ENCODE measurements at regions of chr6 and their contacts with region 1.

Region 1: GRCh38 chr6:30730601-30731435 is 10.7 kb downstream of the TUBB start:
- DNase-seq: peak; percentile 77
- ATAC-seq: peak; percentile 90
- H3K4me3 ChIP-seq: peak overlapping the region; percentile 41 to 53
- H3K27ac ChIP-seq: peak overlapping the region; percentile 55
- H3K4me1 ChIP-seq: peaks cover 12 to 37% of the 10 kb centered on the region in 2 experiments
- H3K27me3 ChIP-seq: no peaks in the 10 kb centered on the region
- CTCF ChIP-seq: peak; percentile 86 to 91 (median 88)
- POLR2A ChIP-seq: no peak
- RAD21 ChIP-seq: peak; percentile 98

Region 2: DNA sequence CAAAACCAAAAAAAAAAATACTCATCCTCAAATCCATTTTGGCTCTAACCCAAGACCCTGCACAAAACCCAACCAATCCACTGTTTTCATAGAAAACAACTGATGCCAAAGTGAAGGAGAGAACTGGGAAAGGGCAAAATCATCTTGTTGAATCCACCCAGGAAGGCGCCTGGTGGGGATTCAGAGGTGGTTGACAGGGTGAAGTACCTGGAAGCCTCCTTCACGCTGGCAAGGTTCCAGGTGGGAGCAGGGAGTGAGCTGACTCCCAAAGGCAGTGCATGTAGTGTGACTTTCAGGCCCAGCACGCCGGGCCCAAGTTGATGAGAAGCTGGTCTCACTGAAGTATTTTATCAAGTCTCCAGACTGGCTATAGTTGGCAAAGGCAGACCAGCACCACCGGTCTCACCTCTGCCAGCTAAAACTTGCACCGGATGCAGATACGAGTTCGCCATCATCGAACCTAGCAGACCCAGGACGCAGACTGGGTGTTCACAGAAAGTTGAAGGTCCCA is 130.3 kb before region 1 on chr6:
- CTCF ChIA-PET with region 1: interaction called, 9 read pairs
- POLR2A ChIA-PET with region 1: interaction called, 5 read pairs
- RAD21 ChIA-PET with region 1: interaction called in 1 of 2 experiments, 3 read pairs
- intact Hi-C with region 1: loop called (anchors 5 kb)
- DNase-seq: no peak
- ATAC-seq: no peak
- H3K4me3 ChIP-seq: no peak overlapping the region
- H3K27ac ChIP-seq: no peak overlapping the region
- H3K4me1 ChIP-seq: peaks cover 0 to 12% of the 10 kb centered on the region in 2 experiments; a peak in 2 of 4 replicates
- H3K27me3 ChIP-seq: no peaks in the 10 kb centered on the region
- CTCF ChIP-seq: no peak
- POLR2A ChIP-seq: no peak
- RAD21 ChIP-seq: no peak

Region 3: GRCh38 chr6:30672445-30673253 is 58.2 kb before region 1 on chr6 and contains the start of gene DHX16:
- CTCF ChIA-PET with region 1: interaction called, 70 read pairs
- POLR2A ChIA-PET with region 1: interaction called, 5 read pairs
- RAD21 ChIA-PET with region 1: interaction called in 1 of 2 experiments, 3 read pairs
- intact Hi-C with region 1: no loop called
- DNase-seq: peak; percentile 99
- ATAC-seq: peak; percentile 85
- H3K4me3 ChIP-seq: peak within 1 kb of the TSS; percentile 98
- H3K27ac ChIP-seq: peak within 1 kb of the TSS; percentile 57
- H3K4me1 ChIP-seq: peaks cover 4 to 22% of the 10 kb centered on the region in 2 experiments; a peak in 3 of 4 replicates
- H3K27me3 ChIP-seq: no peaks in the 10 kb centered on the region
- CTCF ChIP-seq: peak; percentile 84 to 92 (median 88)
- POLR2A ChIP-seq: peak; percentile 42
- RAD21 ChIP-seq: peak; percentile 80
- total RNA-seq, gene DHX16: 46.0 TPM

Region 4: DNA sequence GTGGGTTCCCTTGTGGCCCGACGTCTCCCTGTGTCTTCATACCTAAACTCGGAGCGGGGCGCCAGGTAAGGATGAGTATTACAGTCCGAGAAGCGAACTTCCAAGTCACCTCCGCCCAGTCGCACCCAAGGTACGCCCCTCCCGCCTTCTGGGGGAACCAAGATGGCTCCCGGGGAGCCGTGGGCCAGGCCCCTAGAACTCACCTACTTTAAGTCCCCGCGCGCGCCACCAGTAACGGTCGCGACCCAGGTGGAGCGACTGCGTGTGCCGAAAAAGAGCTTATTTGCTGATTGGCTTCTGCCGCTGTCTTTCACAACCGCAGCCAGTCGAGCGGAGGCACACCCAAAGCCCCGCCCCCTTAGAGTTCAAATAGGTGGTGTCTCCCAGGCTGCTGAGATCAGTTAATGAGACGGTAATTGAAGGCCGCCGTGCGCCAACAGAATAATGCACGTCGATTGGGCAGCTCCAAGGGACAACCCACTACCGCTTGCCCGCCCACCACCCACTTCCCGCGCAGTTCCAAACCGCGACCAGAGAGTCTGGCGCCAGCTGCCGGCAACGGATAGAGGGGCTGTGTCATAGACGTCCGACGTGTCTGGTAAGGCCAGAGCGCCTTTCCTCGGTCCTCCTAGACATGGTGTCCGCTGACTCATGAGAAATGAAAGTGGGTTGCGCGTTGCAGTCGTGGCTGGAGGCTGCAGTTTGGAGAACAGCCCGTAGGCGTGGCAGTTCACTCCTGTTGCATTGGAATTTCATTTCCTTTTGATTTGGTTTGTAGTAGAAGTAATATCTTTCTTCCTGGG is 13.6 kb before region 1 on chr6 and contains the start of gene MDC1:
- CTCF ChIA-PET with region 1: interaction called, 17 read pairs
- POLR2A ChIA-PET with region 1: interaction called, 7 read pairs
- RAD21 ChIA-PET with region 1: no interaction called
- intact Hi-C with region 1: no loop called
- DNase-seq: peak; percentile 100
- ATAC-seq: peak; percentile 76
- H3K4me3 ChIP-seq: peak within 1 kb of the TSS; percentile 64 to 66
- H3K27ac ChIP-seq: peak within 1 kb of the TSS; percentile 89
- H3K4me1 ChIP-seq: peaks cover 9 to 43% of the 10 kb centered on the region in 2 experiments
- H3K27me3 ChIP-seq: no peaks in the 10 kb centered on the region
- CTCF ChIP-seq: peak in 1 of 3 experiments; percentile 31; a peak in 3 of 6 replicates
- POLR2A ChIP-seq: peak; percentile 76
- RAD21 ChIP-seq: no peak
- total RNA-seq, gene MDC1: 75.8 TPM